ENCODE measurements at regions of chr15 and their contacts with region 1.

Region 1: DNA sequence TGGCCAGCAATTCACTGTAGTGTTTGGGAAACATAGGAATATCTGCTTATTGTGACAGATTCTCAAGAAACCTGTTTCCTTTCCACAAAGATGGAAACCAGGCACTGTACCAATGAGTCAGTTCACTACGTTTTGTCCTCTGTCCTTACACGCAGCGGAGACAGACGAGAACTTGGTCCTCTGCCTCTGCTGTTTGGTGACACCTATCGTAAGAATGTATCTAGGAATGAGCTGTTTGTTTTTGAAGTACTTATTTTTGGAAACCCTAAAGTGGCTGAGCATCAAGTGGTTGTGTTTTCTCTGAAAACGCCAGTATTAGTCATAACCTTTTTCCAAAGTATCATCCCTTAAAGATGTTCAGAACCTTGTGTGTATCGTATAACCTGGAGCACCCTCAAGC is 93.0 kb downstream of the PGPEP1L start:
- DNase-seq: peak; percentile 61
- H3K4me3 ChIP-seq: peak overlapping the region in 1 of 3 experiments; percentile 17
- H3K27ac ChIP-seq: peak overlapping the region; percentile 92
- H3K4me1 ChIP-seq: peaks cover 26% of the 10 kb centered on the region
- H3K27me3 ChIP-seq: no peaks in the 10 kb centered on the region
- CTCF ChIP-seq: no peak
- POLR2A ChIP-seq: no peak

Region 2: GRCh38 chr15:98727115-98728085 is 187.2 kb before region 1 on chr15:
- CTCF ChIA-PET with region 1: no interaction called
- POLR2A ChIA-PET with region 1: no interaction called
- dilution Hi-C with region 1: no loop called
- intact Hi-C with region 1: loop called (anchors 2 kb)
- DNase-seq: peak; percentile 92
- H3K4me3 ChIP-seq: no peak overlapping the region
- H3K27ac ChIP-seq: peak overlapping the region; percentile 98
- H3K4me1 ChIP-seq: peaks cover 35% of the 10 kb centered on the region
- H3K27me3 ChIP-seq: no peaks in the 10 kb centered on the region
- CTCF ChIP-seq: no peak
- POLR2A ChIP-seq: no peak

Region 3: GRCh38 chr15:98745650-98746622 is 168.7 kb before region 1 on chr15:
- CTCF ChIA-PET with region 1: no interaction called
- POLR2A ChIA-PET with region 1: no interaction called
- dilution Hi-C with region 1: no loop called
- intact Hi-C with region 1: no loop called
- DNase-seq: no peak
- H3K4me3 ChIP-seq: no peak overlapping the region
- H3K27ac ChIP-seq: no peak overlapping the region
- H3K4me1 ChIP-seq: no peaks in the 10 kb centered on the region
- H3K27me3 ChIP-seq: no peaks in the 10 kb centered on the region
- CTCF ChIP-seq: no peak
- POLR2A ChIP-seq: no peak

Region 4: GRCh38 chr15:98865397-98866339 is 49.0 kb before region 1 on chr15:
- CTCF ChIA-PET with region 1: interaction called, 5 read pairs
- POLR2A ChIA-PET with region 1: no interaction called
- dilution Hi-C with region 1: no loop called
- intact Hi-C with region 1: loop called (anchors 1 kb)
- DNase-seq: peak; percentile 68
- H3K4me3 ChIP-seq: peak overlapping the region; percentile 25 to 78 (median 44)
- H3K27ac ChIP-seq: peak overlapping the region; percentile 78
- H3K4me1 ChIP-seq: peaks cover 4% of the 10 kb centered on the region
- H3K27me3 ChIP-seq: no peaks in the 10 kb centered on the region
- CTCF ChIP-seq: no peak
- POLR2A ChIP-seq: peak; percentile 23

Region 5: DNA sequence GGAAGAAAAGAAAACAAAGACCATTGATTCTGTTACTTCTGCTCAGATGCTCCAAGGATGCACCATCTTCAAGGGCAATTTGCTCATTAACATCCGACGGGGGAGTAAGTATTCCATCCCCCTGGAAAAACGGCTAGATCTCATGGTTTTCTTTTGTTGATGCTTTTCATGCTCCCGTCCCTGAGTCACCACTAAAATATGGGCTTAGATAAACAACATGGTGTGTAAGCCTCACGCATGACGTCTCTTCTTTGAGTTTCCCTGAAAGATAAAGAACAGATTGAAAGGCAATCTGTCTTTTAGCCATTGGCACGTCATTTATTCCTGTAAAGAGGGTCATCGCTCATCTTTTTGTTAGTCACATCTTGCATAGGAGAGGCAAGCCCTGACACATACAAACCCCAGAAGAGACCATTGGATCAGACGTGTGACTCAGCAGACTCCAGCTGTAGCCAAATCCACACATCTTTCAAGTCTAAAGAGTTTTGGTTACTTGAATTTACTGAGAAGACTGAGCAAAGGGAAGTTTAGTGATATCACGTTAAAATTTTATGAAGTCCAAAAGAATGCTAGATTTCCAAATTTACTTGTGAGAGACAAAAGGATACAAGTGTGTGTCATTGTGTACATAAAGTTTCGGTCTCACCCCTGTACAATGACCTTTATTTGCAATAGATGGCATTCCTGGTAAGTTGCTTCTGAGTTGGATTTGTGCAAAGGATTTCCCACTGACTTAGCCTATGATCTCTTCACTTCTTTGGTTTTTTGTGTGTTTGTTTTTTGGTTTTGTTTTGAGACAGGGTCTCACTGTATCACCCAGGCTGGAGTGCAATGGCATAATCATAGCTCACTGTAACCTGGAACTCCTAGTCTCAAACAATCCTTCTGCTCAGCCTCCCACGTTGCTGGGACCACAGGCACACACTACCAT is 17.6 kb before region 1 on chr15:
- CTCF ChIA-PET with region 1: interaction called, 11 read pairs
- POLR2A ChIA-PET with region 1: interaction called, 4 read pairs
- dilution Hi-C with region 1: no loop called
- intact Hi-C with region 1: loop called (anchors 1 kb)
- DNase-seq: peak; percentile 95
- H3K4me3 ChIP-seq: peak overlapping the region in 1 of 3 experiments; percentile 1
- H3K27ac ChIP-seq: peak overlapping the region; percentile 99
- H3K4me1 ChIP-seq: peaks cover 32% of the 10 kb centered on the region
- H3K27me3 ChIP-seq: no peaks in the 10 kb centered on the region
- CTCF ChIP-seq: no peak
- POLR2A ChIP-seq: no peak

Region 6: DNA sequence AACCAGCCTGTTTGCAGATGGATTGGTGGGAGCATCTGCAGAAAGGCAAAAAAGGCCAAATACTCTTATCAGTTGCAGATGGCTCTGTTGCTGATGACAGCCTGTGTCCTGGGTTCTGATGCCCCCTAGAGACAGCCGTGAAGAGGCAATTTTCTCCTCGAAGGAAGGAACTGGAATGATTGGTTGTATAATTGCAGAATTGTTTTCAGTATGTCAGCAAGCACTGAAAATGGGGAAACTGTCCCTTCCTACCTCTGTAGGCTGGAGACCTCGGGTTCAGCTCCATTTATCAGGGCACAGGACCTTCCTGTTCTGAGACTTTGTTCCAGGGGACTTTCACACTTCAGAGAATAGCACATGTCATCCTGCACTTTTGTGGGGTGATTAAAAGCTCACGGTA is 10.1 kb before region 1 on chr15:
- CTCF ChIA-PET with region 1: interaction called, 19 read pairs
- POLR2A ChIA-PET with region 1: no interaction called
- dilution Hi-C with region 1: no loop called
- intact Hi-C with region 1: loop called (anchors 1 kb)
- DNase-seq: peak; percentile 53
- H3K4me3 ChIP-seq: no peak overlapping the region
- H3K27ac ChIP-seq: peak overlapping the region; percentile 15
- H3K4me1 ChIP-seq: peaks cover 42% of the 10 kb centered on the region
- H3K27me3 ChIP-seq: no peaks in the 10 kb centered on the region
- CTCF ChIP-seq: peak; percentile 52 to 58
- POLR2A ChIP-seq: no peak

Region 7: DNA sequence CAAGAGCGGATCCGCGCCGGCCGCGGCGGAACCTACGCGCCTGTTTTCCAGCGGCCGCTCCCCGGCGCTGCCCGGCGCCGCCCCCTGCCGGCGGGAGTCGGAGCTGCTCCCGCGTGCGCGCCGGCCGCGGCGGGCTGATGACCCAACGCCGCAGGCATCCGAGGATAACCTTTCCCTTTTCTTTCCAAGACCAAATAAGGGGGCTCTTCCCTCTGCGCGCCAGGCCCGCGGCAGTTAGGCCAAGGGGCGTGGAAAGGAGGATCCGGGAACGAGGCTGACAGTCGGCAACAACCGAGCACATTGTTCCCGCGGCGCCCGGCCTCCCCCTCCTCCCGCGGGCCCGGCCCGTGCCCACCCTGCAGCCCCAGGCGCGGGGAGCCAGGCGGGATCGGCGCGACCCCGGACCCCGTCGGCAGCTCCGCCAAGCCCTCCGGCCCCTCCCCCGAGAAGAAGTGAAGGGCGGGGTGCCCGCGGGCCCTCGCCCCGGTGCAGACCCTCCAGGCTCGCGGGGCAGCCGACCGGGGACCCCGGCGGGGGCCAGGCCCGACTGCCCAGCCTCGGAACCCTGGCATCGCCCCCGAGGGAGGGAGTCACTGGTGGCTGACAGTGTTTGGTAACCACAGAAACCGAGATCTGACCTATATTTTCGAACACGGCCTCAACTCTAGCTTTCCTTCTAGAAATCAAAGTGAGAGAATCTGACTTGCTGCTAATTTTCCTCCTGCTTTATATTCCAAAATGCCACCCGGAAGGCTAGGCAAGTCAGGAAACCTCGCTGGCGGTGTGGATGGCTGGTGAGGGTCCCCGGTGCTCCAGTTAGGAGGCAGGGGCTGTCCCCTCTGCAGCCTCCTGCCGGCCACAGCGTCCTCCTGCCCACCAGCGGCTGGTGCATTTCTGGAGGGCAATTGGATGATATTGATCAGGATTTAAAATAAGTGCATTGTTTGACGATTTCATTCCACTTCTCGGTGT is 144.7 kb after region 1 on chr15:
- CTCF ChIA-PET with region 1: interaction called, 4 read pairs
- POLR2A ChIA-PET with region 1: interaction called, 5 read pairs
- dilution Hi-C with region 1: no loop called
- intact Hi-C with region 1: loop called (anchors 2 kb)
- DNase-seq: peak; percentile 61
- H3K4me3 ChIP-seq: peak overlapping the region; percentile 34 to 60 (median 40)
- H3K27ac ChIP-seq: peak overlapping the region; percentile 12
- H3K4me1 ChIP-seq: peaks cover 8% of the 10 kb centered on the region
- H3K27me3 ChIP-seq: peaks cover 0 to 5% of the 10 kb centered on the region in 2 experiments
- CTCF ChIP-seq: peak; percentile 56 to 85
- POLR2A ChIP-seq: no peak

Measured in endothelial cell of umbilical vein (primary cell).